ENCODE measurements at regions of chr2 and their contacts with region 1.

Region 1: DNA sequence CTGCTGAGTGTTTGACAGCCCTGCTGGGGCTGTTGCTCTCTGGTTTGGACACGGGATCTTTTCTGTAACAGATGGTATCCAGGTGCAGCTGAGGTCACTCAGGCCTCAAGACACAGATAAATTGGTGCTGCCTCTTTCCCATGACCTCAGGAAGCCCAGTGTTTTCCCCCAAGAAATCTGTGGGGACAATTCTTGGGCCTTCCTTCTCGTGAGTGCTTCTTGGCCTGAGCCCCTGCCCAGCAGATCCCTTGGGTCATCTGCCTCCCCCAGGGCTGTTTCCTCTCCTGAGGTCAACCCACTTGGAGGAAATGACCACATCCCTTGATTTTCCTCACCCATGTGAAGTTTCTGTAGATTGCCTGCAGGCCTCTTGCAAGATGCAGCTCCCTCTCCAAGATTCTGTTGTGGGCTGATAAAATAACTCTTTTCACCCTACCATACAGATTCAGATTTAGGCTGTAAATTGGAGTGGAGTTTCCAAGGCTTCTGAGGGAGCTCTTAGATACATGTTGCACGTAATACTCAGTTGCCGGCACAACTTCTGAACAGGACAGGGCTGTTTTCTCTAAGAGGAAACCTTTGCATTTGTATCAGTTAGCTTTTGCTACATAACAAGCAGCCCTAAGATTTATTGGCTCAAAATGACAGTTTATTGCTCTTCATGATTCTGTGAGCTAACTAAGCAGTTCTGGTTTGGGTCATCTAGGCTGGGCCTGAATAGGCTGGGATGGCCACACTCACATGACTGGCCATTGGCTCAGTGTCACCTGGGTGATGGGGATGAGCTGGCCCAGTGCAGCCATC is 13.1 kb downstream of the ZAP70 start:
- DNase-seq: no peak
- H3K4me3 Mint-ChIP-seq: no peak overlapping the region
- H3K27ac Mint-ChIP-seq: no peak overlapping the region
- H3K4me1 Mint-ChIP-seq: peaks cover 12% of the 10 kb centered on the region
- H3K27me3 Mint-ChIP-seq: no peaks in the 10 kb centered on the region
- CTCF ChIP-seq: no peak

Region 2: DNA sequence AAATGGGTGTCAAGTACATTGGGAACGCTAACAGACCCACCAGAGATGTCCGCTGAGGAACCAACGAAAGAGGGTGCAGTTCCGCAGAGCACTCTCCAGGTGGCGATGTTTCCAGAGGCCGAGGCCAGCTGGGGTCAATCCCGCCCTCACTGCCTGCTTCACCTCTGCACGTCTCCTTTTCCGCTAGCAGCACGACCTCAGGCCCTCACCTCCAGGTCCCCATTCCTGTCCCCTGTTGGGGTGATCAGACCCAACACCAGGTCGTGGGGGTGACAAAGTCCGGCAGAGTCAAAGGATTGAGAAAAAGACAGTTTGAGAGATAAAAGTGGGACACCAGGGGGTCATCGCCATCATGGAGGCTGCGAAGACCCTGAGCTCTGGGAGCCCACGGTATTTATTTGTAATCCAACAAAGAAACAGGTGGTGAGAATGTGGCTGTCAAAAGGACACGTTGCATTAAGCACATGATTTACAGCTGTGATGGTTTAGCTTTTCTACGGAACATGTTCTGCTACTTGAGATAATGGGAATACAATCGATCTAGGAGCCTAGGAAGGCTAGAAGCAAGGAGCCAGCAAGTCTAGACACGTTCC is 14.2 kb after region 1 on chr2:
- CTCF ChIA-PET with region 1: interaction called, 10 read pairs
- POLR2A ChIA-PET with region 1: interaction called, 3 read pairs
- intact Hi-C with region 1: no loop called
- DNase-seq: peak; percentile 38
- H3K4me3 Mint-ChIP-seq: no peak overlapping the region
- H3K27ac Mint-ChIP-seq: no peak overlapping the region
- H3K4me1 Mint-ChIP-seq: peaks cover 23% of the 10 kb centered on the region
- H3K27me3 Mint-ChIP-seq: no peaks in the 10 kb centered on the region
- CTCF ChIP-seq: peak; percentile 61

Region 3: GRCh38 chr2:98026927-98027522 is 300.6 kb after region 1 on chr2:
- CTCF ChIA-PET with region 1: no interaction called
- POLR2A ChIA-PET with region 1: no interaction called
- intact Hi-C with region 1: no loop called
- DNase-seq: no peak
- H3K4me3 Mint-ChIP-seq: no peak overlapping the region
- H3K27ac Mint-ChIP-seq: no peak overlapping the region
- H3K4me1 Mint-ChIP-seq: peaks cover 6% of the 10 kb centered on the region
- H3K27me3 Mint-ChIP-seq: peaks cover 25% of the 10 kb centered on the region
- CTCF ChIP-seq: no peak

Region 4: DNA sequence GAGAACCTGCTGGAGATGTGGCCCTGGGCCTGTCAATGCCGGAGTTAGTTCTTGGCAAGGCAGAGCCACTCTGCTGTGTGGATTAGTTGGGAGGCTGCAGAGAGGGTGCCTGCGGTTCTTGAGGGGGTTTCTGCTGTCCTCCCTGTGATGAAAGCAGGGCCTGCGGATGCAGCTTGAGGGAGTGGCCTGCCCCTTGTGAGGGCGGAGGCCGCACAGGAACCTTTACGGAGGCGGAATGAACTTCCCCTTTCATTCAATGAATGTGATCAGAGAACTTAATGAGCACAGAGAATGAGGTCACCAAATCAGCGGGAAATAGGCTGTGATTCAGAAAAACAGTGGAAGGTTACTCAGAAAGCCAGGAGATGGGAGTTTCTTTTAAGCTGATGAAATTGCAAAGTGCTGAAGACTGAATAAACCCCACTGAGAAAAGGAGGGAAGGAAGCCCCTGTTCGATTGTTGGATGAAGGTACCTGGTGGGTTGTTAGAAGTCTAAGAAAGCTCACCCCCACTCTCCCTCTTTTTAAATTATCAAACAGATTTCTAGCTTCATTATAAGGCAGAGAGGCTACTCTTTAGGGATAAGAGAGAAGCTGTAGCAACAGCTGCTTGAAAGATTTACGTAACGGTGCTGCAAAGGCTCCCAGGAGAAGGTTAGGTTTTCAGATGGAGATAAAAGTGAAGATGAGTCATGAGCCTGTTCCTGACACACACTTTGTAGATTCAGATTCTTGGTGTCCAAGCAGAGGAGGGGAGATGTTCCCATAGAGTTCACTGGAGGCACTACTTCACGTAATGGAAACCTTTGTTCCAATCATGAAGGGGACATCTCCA is 407.9 kb after region 1 on chr2:
- CTCF ChIA-PET with region 1: no interaction called
- POLR2A ChIA-PET with region 1: no interaction called
- intact Hi-C with region 1: no loop called
- DNase-seq: peak; percentile 0
- H3K4me3 Mint-ChIP-seq: no peak overlapping the region
- H3K27ac Mint-ChIP-seq: no peak overlapping the region
- H3K4me1 Mint-ChIP-seq: no peaks in the 10 kb centered on the region
- H3K27me3 Mint-ChIP-seq: no peaks in the 10 kb centered on the region
- CTCF ChIP-seq: no peak